ENCODE measurements at regions of chr22 and their contacts with region 1.

Region 1: GRCh38 chr22:45284705-45285262 is at the start of gene UPK3A:
- DNase-seq: peak; percentile 84
- ATAC-seq: peak; percentile 86
- H3K4me3 Mint-ChIP-seq: peak within 1 kb of the TSS; percentile 54
- H3K27ac Mint-ChIP-seq: peak within 1 kb of the TSS; percentile 61
- H3K4me1 Mint-ChIP-seq: peaks cover 57% of the 10 kb centered on the region
- H3K27me3 Mint-ChIP-seq: no peaks in the 10 kb centered on the region
- CTCF ChIP-seq: no peak
- total RNA-seq, gene UPK3A: 1.4 and 1.6 TPM in 2 replicates

Region 2: GRCh38 chr22:45296628-45297297 is 12.0 kb after region 1 on chr22:
- CTCF ChIA-PET with region 1: no interaction called
- POLR2A ChIA-PET with region 1: interaction called, 8 read pairs
- intact Hi-C with region 1: loop called (anchors 1 kb)
- DNase-seq: no peak
- ATAC-seq: peak; percentile 88
- H3K4me3 Mint-ChIP-seq: peak overlapping the region; percentile 57
- H3K27ac Mint-ChIP-seq: peak overlapping the region; percentile 87
- H3K4me1 Mint-ChIP-seq: peaks cover 22% of the 10 kb centered on the region
- H3K27me3 Mint-ChIP-seq: no peaks in the 10 kb centered on the region
- CTCF ChIP-seq: no peak

Region 3: GRCh38 chr22:45318168-45318557 is 33.4 kb after region 1 on chr22:
- CTCF ChIA-PET with region 1: no interaction called
- POLR2A ChIA-PET with region 1: interaction called, 6 read pairs
- intact Hi-C with region 1: loop called (anchors 1 kb)
- DNase-seq: peak; percentile 57
- ATAC-seq: peak; percentile 88
- H3K4me3 Mint-ChIP-seq: peak overlapping the region; percentile 80
- H3K27ac Mint-ChIP-seq: peak overlapping the region; percentile 95
- H3K4me1 Mint-ChIP-seq: peaks cover 73% of the 10 kb centered on the region
- H3K27me3 Mint-ChIP-seq: no peaks in the 10 kb centered on the region
- CTCF ChIP-seq: no peak

Region 4: DNA sequence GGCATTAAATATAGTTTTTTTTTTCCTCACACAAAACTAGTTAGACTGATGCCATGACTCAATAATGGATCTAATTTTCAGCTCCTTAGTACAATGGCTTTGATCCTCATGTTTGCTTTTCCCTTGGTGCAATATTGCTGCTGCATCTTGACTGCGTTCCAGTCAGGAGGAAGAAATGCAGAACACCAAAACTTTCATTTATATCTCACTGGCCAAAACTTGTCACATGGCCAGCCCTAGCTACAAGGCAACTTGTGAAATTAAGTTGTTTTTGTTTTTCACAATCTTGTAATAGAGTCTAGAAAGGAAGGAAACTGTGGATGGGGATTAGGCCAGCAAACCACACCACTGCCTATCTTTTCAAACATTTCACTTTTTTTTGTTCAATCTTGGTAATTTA is 91.9 kb after region 1 on chr22:
- CTCF ChIA-PET with region 1: no interaction called
- POLR2A ChIA-PET with region 1: no interaction called
- intact Hi-C with region 1: no loop called
- DNase-seq: no peak
- ATAC-seq: no peak
- H3K4me3 Mint-ChIP-seq: no peak overlapping the region
- H3K27ac Mint-ChIP-seq: no peak overlapping the region
- H3K4me1 Mint-ChIP-seq: peaks cover 5% of the 10 kb centered on the region
- H3K27me3 Mint-ChIP-seq: peaks cover 2% of the 10 kb centered on the region
- CTCF ChIP-seq: no peak